ENCODE measurements at regions of chr3 and their contacts with region 1.

Region 1: DNA sequence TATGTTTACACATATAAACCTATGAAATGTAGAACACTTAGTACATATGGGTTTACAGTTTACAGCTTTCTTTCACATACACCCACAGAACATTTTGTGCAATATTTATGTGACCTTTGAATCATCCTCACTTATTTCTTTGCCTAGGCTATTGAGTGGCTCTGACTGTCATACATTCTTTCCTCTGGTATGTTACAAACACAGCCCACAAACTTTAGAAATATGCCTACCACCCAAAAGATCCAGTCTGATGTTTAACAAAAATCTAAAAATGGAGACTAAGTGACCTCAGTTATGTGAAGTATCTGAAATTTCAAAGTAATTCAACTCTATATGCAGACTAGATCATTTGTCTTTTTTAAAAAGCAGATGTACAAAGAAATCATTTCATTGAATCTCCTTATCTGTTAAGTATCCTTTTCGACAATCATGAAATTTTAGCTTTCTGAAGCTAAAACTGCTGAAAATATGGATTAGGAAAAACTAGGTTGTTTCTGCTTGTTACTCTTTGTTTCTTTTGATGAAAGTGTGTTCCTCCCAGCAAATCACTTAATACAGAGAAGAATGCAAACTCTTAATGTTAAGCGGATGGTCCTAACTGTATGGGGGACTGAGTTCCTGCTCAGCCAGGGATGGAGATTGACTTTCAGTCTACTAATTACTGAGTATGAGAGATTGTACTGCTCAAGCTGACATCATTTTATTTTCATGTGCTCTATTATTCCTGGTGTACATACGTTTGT is 27.7 kb downstream of the CCDC54 start:
- DNase-seq: no peak
- H3K4me3 ChIP-seq: no peak overlapping the region
- H3K27ac ChIP-seq: no peak overlapping the region
- H3K4me1 ChIP-seq: no peaks in the 10 kb centered on the region
- H3K27me3 ChIP-seq: no peaks in the 10 kb centered on the region
- CTCF ChIP-seq: no peak
- POLR2A ChIP-seq: no peak

Region 2: GRCh38 chr3:105431200-105431599 is 1973.7 kb before region 1 on chr3:
- intact Hi-C with region 1: loop called (anchors 10 kb)
- DNase-seq: no peak
- H3K4me3 ChIP-seq: no peak overlapping the region
- H3K27ac ChIP-seq: no peak overlapping the region
- H3K4me1 ChIP-seq: no peaks in the 10 kb centered on the region
- H3K27me3 ChIP-seq: no peaks in the 10 kb centered on the region
- CTCF ChIP-seq: no peak
- POLR2A ChIP-seq: no peak

Region 3: DNA sequence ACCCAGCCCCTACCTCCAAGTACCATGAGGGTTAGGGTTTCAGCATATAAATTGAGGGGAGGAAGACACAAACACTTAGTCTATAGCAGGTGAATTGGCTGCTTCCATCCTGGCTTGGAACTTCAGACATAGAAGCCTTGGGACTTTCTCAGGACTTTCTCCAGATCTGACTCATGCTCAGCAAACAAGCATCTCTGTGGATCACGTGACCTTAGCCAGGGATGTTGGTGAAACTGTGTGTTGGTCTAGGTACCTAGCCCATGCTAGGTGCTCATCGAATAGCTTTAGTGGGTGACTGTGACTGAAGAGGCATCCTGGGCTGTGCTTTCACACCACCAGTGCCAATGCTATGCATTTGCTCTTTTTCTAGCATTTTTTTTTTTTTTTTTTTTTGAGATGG is 627.0 kb after region 1 on chr3:
- intact Hi-C with region 1: no loop called
- DNase-seq: no peak
- H3K4me3 ChIP-seq: no peak overlapping the region
- H3K27ac ChIP-seq: no peak overlapping the region
- H3K4me1 ChIP-seq: no peaks in the 10 kb centered on the region
- H3K27me3 ChIP-seq: no peaks in the 10 kb centered on the region
- CTCF ChIP-seq: no peak
- POLR2A ChIP-seq: no peak